GM18951 (cell line): ENCODE measurements at regions of chr3 and their contacts with region 1.

Region 1: GRCh38 chr3:107271787-107272387 is 105.4 kb upstream of the CCDC54 start:
- POLR2A ChIP-seq: no peak

Region 2: DNA sequence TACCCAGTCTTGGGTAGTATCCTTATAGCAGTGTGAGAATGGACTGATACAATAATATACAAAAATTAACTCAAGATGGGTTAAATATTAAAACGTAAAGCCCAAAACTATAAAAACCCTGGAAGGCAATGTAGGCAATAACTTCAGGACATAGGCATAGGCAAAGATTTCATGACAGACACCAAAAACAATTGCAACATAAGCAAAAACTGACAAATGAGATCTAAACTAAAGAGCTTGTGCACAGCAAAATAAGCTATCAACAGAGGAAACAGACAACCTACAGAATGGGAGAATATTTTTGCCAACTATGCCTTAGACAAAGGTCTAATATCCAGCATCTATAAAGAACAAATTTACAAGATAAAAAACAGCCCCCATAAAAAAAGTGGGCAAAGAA is 99.5 kb before region 1 on chr3:
- in situ Hi-C with region 1: no loop called
- POLR2A ChIP-seq: no peak

Region 3: DNA sequence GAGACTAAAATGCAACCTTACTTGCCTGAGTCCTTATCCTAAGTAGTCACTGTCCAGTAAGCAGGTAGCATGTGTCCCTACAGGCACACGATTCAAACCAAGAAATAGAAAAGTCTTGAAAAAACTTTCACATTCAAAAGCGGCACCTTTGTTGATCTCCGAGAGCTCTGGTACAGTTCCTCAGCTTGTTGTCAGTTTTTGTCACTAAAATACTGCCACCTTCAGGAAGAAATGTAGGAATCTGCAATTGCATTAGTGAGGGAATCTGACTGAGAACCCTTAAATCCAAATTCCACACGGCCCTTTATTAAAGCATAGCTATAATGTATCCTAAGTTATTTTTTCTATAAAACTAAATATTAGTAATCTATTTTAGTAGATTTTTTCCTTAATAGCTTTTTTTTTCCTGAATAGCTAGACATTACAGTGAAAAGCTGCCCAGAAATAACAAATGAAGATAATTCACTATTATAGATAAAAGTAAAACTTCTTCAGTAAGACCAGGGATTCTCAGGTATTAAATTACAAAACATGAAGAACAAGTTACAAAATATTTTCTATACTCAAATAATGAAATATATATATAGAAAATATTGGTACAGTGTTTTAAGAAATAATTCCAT is 149.4 kb after region 1 on chr3:
- in situ Hi-C with region 1: loop called (anchors 25 kb)
- POLR2A ChIP-seq: no peak